ENCODE measurements at regions of chr3 and their contacts with region 1.

Region 1: DNA sequence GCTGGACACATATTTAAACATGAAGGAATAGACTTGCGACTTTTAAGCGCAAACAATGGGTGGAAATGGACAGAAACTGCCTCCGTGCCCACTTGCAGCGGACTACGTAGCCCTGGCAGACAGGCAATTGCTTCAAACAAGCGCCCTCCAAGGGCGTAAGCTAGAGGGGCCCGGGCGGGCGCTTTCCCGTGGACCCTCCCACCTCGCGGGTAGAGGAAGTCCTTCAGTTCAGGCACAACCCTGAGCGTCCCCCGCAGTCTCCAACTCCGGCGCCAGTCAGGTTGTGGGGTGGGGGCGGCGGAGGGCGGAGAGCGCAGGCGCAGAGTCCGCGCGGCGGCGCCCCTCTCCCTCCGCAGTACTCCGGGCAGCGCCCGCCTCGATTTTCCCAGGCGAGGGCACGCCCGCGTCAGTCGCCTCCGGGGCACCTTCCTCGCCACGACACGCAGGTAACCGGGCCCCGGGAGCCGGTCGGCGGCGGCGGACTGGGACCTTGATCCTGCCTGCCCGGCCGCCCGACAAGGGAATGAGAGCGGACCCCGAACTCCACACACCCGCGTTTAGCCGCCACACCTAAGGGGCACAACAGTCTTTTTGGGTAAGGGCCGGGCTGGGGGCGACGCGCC is at the start of gene SLC35G2:
- DNase-seq: no peak
- ATAC-seq: peak; percentile 71
- H3K4me3 ChIP-seq: peak within 1 kb of the TSS; percentile 56 to 65
- H3K27ac ChIP-seq: peak within 1 kb of the TSS; percentile 61
- H3K4me1 ChIP-seq: peaks cover 0 to 20% of the 10 kb centered on the region in 2 experiments; a peak in 2 of 4 replicates
- H3K27me3 ChIP-seq: no peaks in the 10 kb centered on the region
- CTCF ChIP-seq: no peak
- POLR2A ChIP-seq: peak; percentile 44
- RAD21 ChIP-seq: no peak
- total RNA-seq, gene SLC35G2: 3.3 TPM

Region 2: GRCh38 chr3:136838641-136839555 is 20.0 kb after region 1 on chr3:
- CTCF ChIA-PET with region 1: no interaction called
- POLR2A ChIA-PET with region 1: no interaction called
- RAD21 ChIA-PET with region 1: interaction called in 1 of 2 experiments, 10 read pairs
- intact Hi-C with region 1: no loop called
- DNase-seq: no peak
- ATAC-seq: no peak
- H3K4me3 ChIP-seq: no peak overlapping the region
- H3K27ac ChIP-seq: no peak overlapping the region
- H3K4me1 ChIP-seq: peaks cover 0 to 11% of the 10 kb centered on the region in 2 experiments; a peak in 2 of 4 replicates
- H3K27me3 ChIP-seq: no peaks in the 10 kb centered on the region
- CTCF ChIP-seq: no peak
- POLR2A ChIP-seq: no peak
- RAD21 ChIP-seq: no peak

Measured in HCT116 (cell line).